Calu3 (cell line): ENCODE measurements at regions of chr20 and their contacts with region 1.

Region 1: DNA sequence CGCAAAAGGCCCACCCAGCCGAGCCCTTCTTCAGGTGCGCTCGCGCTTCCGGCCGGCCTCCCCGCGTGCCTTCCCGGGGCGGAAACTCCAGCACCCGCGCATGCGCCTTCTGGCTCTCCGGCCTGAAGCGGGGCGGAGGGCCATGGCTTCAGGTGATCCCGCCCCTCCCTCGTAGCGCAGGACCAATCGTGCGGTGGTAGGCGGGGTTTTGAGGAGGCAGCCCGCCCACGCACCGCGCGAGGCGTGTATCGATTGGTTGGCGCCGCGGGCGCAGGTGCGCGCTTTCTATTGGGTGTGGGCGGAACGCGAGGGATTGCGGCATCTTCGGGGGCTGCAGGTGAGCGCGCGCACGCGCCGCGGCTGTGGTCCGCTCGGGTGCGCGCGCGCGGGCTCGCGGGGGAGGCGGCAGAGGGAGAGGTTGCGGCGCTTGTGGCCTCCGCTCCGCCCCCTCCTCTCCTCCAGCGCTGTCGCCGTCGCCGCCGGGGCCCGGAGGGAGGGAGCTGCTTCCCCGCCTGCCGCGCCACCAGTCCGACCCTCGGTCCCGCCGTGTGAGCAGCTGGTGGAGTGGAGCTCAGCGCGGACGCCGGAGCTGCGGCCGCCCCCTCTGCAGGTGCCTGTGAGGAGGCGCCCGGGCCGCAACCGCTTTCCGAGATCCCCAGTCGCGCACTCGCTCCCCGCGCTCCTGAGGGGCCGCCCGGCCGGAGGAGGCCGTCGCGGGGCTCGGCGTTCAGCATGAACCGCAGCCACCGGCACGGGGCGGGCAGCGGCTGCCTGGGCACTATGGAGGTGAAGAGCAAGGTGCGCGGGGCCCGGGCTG is at the start of gene PARD6B:
- DNase-seq: peak; percentile 100
- H3K4me3 Mint-ChIP-seq: peak within 1 kb of the TSS; percentile 61
- H3K27ac Mint-ChIP-seq: peak within 1 kb of the TSS; percentile 99
- H3K4me1 Mint-ChIP-seq: peaks cover 56% of the 10 kb centered on the region
- H3K27me3 Mint-ChIP-seq: no peaks in the 10 kb centered on the region
- CTCF ChIP-seq: no peak
- total RNA-seq, gene PARD6B: 114 and 127 TPM in 2 replicates

Region 2: DNA sequence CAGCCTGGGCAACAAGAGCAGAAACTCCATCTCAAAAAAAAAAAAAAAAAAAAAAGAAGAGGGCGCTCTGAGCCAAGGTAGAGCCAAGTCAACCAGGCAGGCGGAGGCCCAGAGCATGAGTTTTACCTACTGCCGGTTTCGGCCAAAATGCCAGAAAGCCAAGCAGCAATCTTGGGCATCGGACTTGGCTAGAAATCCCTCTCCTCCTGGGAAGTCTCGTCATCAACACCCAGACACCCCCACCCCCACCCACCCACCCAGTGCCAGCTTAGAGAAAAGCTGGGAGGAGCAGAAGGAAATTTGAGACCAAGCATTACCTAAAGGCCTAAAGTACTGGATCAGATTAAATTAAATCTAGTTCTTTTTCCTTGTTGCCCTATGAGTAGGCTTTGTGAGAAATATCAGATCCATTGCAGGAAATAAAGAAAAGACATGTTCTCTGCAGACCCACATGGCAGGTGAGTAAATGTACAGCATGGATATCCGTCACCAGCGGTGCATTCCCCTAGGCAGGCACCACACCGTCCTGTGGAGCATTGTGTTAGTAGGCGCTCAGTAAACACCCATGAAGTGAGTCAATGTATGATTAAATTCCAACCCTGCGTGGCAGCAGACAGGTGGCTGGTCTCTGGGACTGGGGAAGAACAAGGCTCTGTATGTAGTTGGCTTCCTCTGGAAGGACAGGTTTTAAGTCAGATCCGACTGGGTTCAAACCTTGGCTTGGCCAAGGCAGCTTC is 61.0 kb before region 1 on chr20:
- CTCF ChIA-PET with region 1: interaction called, 10 read pairs
- intact Hi-C with region 1: no loop called
- DNase-seq: peak; percentile 88
- H3K4me3 Mint-ChIP-seq: peak overlapping the region; percentile 13
- H3K27ac Mint-ChIP-seq: peak overlapping the region; percentile 23
- H3K4me1 Mint-ChIP-seq: peaks cover 79% of the 10 kb centered on the region
- H3K27me3 Mint-ChIP-seq: no peaks in the 10 kb centered on the region
- CTCF ChIP-seq: no peak

Region 3: DNA sequence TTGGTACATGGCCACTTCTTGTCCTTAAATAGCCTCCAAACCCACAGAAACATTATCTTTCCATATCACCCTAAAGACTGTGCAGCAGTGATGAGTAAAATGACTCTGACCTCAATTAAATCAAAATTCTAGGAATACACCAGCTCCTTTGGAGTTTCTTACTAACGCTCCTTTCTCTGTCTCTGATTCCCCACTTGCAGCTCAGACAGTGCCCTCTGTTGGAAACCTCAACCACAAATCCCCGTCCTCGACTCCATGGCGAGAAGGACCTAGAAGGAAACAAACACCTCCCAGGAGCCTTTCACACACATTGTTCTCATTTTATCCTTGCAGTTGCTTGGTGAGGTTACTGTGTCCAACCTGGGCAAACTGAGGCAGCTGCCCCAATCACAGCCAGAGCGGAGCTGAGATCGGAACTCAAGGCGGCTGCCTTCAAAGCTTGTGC is 17.6 kb before region 1 on chr20:
- CTCF ChIA-PET with region 1: interaction called, 12 read pairs
- intact Hi-C with region 1: no loop called
- DNase-seq: peak; percentile 59
- H3K4me3 Mint-ChIP-seq: no peak overlapping the region
- H3K27ac Mint-ChIP-seq: no peak overlapping the region
- H3K4me1 Mint-ChIP-seq: peaks cover 55% of the 10 kb centered on the region
- H3K27me3 Mint-ChIP-seq: no peaks in the 10 kb centered on the region
- CTCF ChIP-seq: peak; percentile 38

Region 4: GRCh38 chr20:50750145-50750671 is 18.9 kb after region 1 on chr20:
- CTCF ChIA-PET with region 1: interaction called, 50 read pairs
- intact Hi-C with region 1: no loop called
- DNase-seq: no peak
- H3K4me3 Mint-ChIP-seq: peak overlapping the region; percentile 39
- H3K27ac Mint-ChIP-seq: peak overlapping the region; percentile 86
- H3K4me1 Mint-ChIP-seq: peaks cover 67% of the 10 kb centered on the region
- H3K27me3 Mint-ChIP-seq: no peaks in the 10 kb centered on the region
- CTCF ChIP-seq: no peak

Region 5: GRCh38 chr20:50879649-50880550 is 148.6 kb after region 1 on chr20:
- CTCF ChIA-PET with region 1: no interaction called
- intact Hi-C with region 1: no loop called
- DNase-seq: no peak
- H3K4me3 Mint-ChIP-seq: no peak overlapping the region
- H3K27ac Mint-ChIP-seq: no peak overlapping the region
- H3K4me1 Mint-ChIP-seq: no peaks in the 10 kb centered on the region
- H3K27me3 Mint-ChIP-seq: no peaks in the 10 kb centered on the region
- CTCF ChIP-seq: no peak